ENCODE measurements at regions of chr14 and their contacts with region 1.

Region 1: DNA sequence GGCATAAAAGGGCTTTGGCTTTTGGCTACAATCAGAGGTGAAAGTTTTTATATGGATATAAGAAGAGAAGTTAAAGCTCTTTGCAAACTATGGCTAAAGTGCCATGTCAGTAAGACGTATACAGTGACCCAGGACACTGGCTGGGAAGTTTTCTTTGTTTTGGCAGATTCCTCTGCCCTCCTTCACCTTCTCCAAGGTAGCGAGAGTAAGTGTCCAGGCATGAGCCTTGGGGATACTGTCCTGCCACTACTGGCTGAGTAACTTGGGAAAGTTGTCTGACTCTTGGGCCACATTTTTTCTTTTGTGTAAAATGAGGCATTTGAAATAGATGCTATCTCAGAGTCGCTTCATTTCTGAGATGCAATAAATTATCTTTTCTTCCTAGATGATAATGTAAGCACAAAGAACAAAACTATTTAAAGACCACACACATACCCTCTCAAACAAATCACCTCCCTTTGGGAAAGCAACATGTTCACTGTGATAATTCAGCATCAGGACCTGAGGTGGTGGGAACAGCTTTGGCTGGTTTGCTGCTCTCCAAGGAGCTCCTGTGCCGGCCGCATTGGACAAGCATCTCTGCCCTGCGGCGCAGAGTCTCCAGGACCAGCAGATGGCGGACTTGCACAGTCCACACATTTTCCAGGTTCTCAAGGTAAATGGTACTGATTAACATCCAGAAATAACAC is 106.3 kb downstream of the PTCSC3 start:
- DNase-seq: peak; percentile 51
- CTCF ChIP-seq: peak; percentile 86

Region 2: DNA sequence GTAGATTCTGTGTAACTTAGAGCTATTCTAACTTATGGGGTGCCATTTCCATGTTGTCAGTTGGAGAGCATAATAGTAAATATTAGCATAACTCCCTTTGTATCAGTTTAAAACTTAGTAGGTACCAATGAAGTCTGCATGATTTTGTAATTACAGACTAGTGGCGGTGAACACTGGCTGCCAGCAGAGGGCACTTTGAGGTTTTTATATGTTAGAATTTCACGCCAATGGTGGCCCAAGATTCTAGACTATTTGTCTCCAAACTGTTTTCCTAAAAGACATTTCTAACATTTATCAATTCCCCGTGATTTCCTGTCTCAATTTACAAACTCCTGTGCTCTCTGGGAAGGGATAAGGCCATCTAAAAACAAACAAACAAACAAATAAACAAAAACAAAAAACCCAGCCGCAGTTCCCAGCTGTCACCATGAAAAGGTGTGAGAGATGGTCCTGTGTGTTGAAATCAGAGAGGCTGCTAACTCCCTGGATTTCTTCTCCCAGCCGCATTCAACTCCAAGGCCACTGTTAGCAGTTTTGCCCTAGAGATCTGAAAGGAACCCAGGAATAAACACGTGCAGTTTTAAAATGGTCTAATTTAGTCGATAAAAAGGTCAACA is 186.4 kb before region 1 on chr14:
- CTCF ChIA-PET with region 1: interaction called, 105 read pairs
- POLR2A ChIA-PET with region 1: no interaction called
- DNase-seq: peak; percentile 39
- CTCF ChIP-seq: peak; percentile 67

Region 3: DNA sequence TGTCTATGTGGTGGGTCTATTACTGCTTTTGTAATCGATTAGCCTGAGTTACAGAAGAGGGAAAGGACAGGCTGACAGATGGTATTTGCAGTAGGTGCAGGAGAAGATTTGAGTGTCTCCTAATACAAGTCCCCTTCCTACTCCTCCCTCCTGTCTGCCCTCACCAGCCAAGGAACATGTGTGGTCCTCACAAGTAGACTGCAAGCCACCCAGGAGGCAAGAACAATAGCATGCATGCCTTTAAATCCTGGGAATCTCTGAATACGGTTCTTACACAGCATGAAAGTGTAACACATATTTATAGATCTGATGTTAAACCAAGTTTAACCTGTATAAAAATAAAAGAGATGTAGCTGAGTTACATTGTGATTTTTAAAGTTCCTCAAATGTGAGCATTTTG is 10.6 kb before region 1 on chr14:
- CTCF ChIA-PET with region 1: interaction called, 40 read pairs
- POLR2A ChIA-PET with region 1: no interaction called
- DNase-seq: no peak
- CTCF ChIP-seq: no peak

Region 4: GRCh38 chr14:36091096-36091495 is 20.9 kb after region 1 on chr14:
- CTCF ChIA-PET with region 1: interaction called, 12 read pairs
- POLR2A ChIA-PET with region 1: no interaction called
- DNase-seq: no peak
- CTCF ChIP-seq: no peak

Region 5: GRCh38 chr14:36373982-36374673 is 304.0 kb after region 1 on chr14:
- CTCF ChIA-PET with region 1: interaction called, 97 read pairs
- POLR2A ChIA-PET with region 1: no interaction called
- DNase-seq: peak; percentile 60
- CTCF ChIP-seq: peak; percentile 94

Region 6: DNA sequence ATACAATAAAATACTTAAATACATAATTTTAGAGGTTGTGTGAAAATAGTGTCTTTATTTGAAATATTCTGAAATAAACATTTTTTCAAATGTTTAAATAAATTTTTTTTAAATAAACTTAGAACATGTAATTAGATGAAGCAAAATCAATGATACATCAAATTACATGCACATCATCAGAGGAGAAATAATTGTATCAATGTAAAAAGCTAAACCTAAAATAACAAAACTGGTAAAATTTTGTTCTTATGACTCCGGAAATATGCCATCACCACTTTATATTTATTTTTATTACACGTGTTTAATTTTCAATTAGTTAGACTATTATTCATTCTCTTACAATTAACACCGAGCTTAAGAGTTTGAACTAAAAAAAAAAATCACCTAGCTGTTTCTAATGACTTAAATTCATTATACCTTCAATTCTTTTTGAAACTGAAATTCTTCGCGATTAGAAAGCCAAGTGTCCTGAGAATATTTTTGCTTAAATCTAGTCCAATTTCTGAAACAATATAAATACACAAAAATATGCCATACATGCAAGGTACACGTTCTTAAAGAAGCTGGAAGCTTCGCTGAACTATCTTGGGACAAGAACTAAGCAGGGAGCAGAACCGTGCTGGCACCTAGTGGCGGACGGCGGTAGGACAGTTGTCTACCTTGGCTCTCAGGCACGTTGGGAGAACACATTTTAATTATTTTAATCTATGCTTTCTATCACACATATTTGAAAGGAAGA is 871.8 kb after region 1 on chr14:
- CTCF ChIA-PET with region 1: interaction called, 11 read pairs
- POLR2A ChIA-PET with region 1: no interaction called
- DNase-seq: peak; percentile 35
- CTCF ChIP-seq: peak; percentile 98

Measured in GM10248 (cell line).